ENCODE measurements at regions of chr1 and their contacts with region 1.

Region 1: DNA sequence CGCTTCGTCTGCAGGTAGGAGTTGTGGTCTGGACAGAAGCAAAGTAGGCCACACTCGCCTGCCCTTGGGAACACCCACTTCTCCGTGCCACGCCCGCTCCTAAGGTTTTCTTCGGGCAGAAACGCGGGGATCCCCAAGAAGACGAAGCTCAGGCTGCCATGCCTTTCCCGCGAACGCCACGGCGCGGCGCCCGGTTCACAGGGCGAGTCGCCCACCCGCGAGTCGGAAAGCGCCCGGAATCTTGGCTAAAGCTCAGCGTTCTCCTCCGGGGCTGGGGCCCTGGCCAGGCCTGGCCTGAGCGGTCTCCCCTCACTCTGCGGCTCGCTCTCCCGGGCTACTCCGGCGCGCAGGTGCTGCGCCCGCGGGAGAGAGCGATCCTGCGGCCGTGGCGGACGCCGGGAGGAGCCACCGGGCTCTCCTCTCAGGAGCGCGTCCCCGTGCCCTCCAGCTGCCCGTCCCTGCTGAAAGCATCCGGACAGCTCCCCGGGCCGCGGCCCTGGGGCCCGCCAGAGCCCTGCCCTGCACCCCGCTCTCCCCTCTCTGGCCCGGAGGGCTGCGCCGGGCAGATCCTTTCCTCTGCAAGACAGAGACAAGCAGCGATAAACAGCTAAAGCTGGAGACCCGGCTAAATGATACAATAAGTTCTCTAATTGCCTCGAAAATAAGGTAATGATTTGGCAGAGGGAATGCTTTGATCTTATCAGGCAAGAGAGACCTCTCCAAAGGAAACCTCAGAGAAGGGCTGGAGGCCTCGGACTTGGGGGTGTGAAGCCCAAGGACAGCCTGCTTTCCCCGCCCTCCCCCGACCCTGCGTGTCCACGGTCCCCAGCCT is 6.7 kb upstream of the WNT2B start:
- DNase-seq: peak; percentile 70
- H3K4me3 Mint-ChIP-seq: peak overlapping the region; percentile 60
- H3K27ac Mint-ChIP-seq: no peak overlapping the region
- H3K4me1 Mint-ChIP-seq: peaks cover 4% of the 10 kb centered on the region
- H3K27me3 Mint-ChIP-seq: peaks cover 74% of the 10 kb centered on the region

Region 2: GRCh38 chr1:112513112-112513870 is 11.3 kb after region 1 on chr1:
- CTCF ChIA-PET with region 1: interaction called, 12 read pairs
- DNase-seq: no peak
- H3K4me3 Mint-ChIP-seq: no peak overlapping the region
- H3K27ac Mint-ChIP-seq: no peak overlapping the region
- H3K4me1 Mint-ChIP-seq: peaks cover 2% of the 10 kb centered on the region
- H3K27me3 Mint-ChIP-seq: peaks cover 31% of the 10 kb centered on the region

Region 3: GRCh38 chr1:112540226-112540794 is 38.3 kb after region 1 on chr1:
- CTCF ChIA-PET with region 1: no interaction called
- DNase-seq: no peak
- H3K4me3 Mint-ChIP-seq: no peak overlapping the region
- H3K27ac Mint-ChIP-seq: no peak overlapping the region
- H3K4me1 Mint-ChIP-seq: no peaks in the 10 kb centered on the region
- H3K27me3 Mint-ChIP-seq: no peaks in the 10 kb centered on the region

Region 4: DNA sequence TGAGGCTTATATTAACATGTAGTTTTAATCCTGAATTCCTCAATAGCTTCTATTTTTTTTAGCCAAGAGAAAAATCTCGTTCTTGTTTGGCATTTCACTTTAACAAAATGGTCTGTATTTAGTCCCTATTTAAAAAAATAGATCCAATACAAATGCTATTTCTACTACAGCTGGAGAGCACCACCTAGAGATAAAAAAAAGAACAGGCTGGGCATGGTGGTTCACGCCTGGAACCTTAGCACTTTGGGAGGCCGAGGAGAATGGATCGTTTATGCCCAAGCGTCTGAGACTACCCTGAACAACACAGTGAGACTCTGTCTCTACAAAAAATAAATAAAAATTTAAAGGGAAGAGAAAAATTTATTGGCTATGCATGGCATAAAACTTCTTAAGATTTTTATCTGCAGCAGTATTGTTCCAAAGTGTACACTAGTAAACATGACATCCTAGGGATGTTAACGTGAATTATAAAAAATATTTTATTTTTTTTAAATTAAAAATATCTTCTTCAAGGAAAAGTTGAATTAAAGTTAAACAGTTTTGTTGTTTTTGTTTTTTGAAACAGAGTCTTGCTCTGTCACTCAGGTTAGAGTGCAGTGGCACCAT is 112.5 kb after region 1 on chr1:
- CTCF ChIA-PET with region 1: interaction called, 24 read pairs
- DNase-seq: peak; percentile 38
- H3K4me3 Mint-ChIP-seq: no peak overlapping the region
- H3K27ac Mint-ChIP-seq: no peak overlapping the region
- H3K4me1 Mint-ChIP-seq: peaks cover 21% of the 10 kb centered on the region
- H3K27me3 Mint-ChIP-seq: no peaks in the 10 kb centered on the region

Region 5: GRCh38 chr1:112674439-112674985 is 172.5 kb after region 1 on chr1 and contains the start of gene MOV10:
- CTCF ChIA-PET with region 1: interaction called, 15 read pairs
- DNase-seq: peak; percentile 79
- H3K4me3 Mint-ChIP-seq: peak within 1 kb of the TSS; percentile 97
- H3K27ac Mint-ChIP-seq: peak within 1 kb of the TSS; percentile 95
- H3K4me1 Mint-ChIP-seq: peaks cover 34% of the 10 kb centered on the region
- H3K27me3 Mint-ChIP-seq: peaks cover 5% of the 10 kb centered on the region

Region 6: DNA sequence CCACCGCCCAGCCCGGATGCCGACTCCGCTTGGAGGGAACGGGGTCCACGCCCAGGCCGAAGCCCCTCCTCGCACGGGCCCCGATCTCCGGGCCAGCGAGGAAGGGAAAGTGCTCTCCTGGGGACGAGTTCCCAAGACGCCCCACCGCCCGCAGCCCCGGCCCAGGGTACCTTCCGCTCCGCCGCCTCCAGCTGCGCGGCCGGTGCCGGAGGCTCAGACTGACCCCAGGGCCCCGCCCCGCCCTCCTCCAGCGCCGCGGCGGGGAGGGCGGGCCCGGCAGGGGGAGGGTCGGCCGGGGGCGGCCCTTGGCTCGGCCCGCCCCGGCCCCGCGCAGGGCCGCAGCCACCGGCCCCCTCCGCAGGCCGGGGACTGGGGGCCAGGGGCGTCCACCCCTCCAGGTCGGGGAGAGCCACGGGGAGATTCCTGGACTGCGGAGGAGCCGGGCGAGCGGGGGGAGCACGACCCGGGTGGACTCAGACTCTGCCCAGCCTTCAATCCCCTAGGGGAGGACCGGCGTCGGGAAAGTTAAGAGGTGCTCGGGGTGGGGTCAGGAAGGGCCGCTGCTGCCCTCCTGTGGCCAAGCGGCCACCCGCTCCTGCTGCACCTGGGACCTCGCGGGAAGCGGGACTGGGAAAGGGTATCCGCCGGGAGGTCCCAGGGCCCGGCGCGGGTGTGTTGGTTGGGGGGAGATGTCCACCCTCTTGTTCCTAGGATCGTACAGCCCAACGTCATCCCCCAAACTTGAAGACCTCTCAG is 205.1 kb after region 1 on chr1 and contains the start of gene RHOC:
- CTCF ChIA-PET with region 1: interaction called, 39 read pairs
- DNase-seq: peak; percentile 73
- H3K4me3 Mint-ChIP-seq: peak within 1 kb of the TSS; percentile 81
- H3K27ac Mint-ChIP-seq: no peak within 1 kb of the TSS
- H3K4me1 Mint-ChIP-seq: peaks cover 45% of the 10 kb centered on the region
- H3K27me3 Mint-ChIP-seq: peaks cover 49% of the 10 kb centered on the region